ENCODE measurements at regions of chr18 and their contacts with region 1.

Region 1: GRCh38 chr18:63016270-63016669 is 300.9 kb downstream of the PHLPP1 start:
- DNase-seq: peak; percentile 63
- H3K4me3 Mint-ChIP-seq: no peak overlapping the region
- H3K27ac Mint-ChIP-seq: no peak overlapping the region
- H3K4me1 Mint-ChIP-seq: no peaks in the 10 kb centered on the region
- H3K27me3 Mint-ChIP-seq: peaks cover 20% of the 10 kb centered on the region

Region 2: GRCh38 chr18:63046375-63046774 is 30.1 kb after region 1 on chr18:
- CTCF ChIA-PET with region 1: interaction called, 12 read pairs
- POLR2A ChIA-PET with region 1: no interaction called
- intact Hi-C with region 1: no loop called
- DNase-seq: no peak
- H3K4me3 Mint-ChIP-seq: no peak overlapping the region
- H3K27ac Mint-ChIP-seq: no peak overlapping the region
- H3K4me1 Mint-ChIP-seq: peaks cover 12% of the 10 kb centered on the region
- H3K27me3 Mint-ChIP-seq: peaks cover 11% of the 10 kb centered on the region

Region 3: DNA sequence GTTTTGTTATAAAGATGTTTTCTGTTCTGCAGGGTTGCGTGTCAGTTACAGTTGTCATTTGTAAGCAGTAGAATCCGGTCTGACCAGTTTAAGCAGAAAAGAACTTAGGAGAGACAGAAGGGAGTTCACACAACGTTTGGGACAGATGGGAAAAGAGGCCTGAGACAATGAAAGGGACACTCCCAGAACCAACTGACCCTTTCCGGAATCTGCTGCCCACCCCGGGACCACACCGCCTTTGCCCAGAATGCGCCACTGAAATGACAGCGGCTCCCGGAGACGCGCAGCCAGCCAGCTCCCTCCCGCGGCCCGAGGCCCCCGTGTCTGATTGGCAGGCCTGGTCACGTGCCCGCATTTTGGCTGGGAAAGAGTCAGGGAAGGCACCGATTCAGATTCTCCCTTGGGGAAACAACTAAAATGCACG is 58.7 kb after region 1 on chr18:
- CTCF ChIA-PET with region 1: no interaction called
- POLR2A ChIA-PET with region 1: no interaction called
- intact Hi-C with region 1: loop called (anchors 5 kb)
- DNase-seq: peak; percentile 75
- H3K4me3 Mint-ChIP-seq: peak overlapping the region; percentile 78
- H3K27ac Mint-ChIP-seq: no peak overlapping the region
- H3K4me1 Mint-ChIP-seq: peaks cover 11% of the 10 kb centered on the region
- H3K27me3 Mint-ChIP-seq: peaks cover 13% of the 10 kb centered on the region

Region 4: GRCh38 chr18:63119647-63120046 is 103.4 kb after region 1 on chr18:
- CTCF ChIA-PET with region 1: interaction called, 10 read pairs
- POLR2A ChIA-PET with region 1: no interaction called
- intact Hi-C with region 1: loop called (anchors 2 kb)
- DNase-seq: peak; percentile 55
- H3K4me3 Mint-ChIP-seq: no peak overlapping the region
- H3K27ac Mint-ChIP-seq: no peak overlapping the region
- H3K4me1 Mint-ChIP-seq: peaks cover 10% of the 10 kb centered on the region
- H3K27me3 Mint-ChIP-seq: peaks cover 4% of the 10 kb centered on the region

Region 5: GRCh38 chr18:63131106-63131958 is 115.1 kb after region 1 on chr18:
- CTCF ChIA-PET with region 1: interaction called, 25 read pairs
- POLR2A ChIA-PET with region 1: no interaction called
- intact Hi-C with region 1: loop called (anchors 5 kb)
- DNase-seq: peak; percentile 64
- H3K4me3 Mint-ChIP-seq: no peak overlapping the region
- H3K27ac Mint-ChIP-seq: peak overlapping the region; percentile 65
- H3K4me1 Mint-ChIP-seq: peaks cover 30% of the 10 kb centered on the region
- H3K27me3 Mint-ChIP-seq: no peaks in the 10 kb centered on the region

Region 6: DNA sequence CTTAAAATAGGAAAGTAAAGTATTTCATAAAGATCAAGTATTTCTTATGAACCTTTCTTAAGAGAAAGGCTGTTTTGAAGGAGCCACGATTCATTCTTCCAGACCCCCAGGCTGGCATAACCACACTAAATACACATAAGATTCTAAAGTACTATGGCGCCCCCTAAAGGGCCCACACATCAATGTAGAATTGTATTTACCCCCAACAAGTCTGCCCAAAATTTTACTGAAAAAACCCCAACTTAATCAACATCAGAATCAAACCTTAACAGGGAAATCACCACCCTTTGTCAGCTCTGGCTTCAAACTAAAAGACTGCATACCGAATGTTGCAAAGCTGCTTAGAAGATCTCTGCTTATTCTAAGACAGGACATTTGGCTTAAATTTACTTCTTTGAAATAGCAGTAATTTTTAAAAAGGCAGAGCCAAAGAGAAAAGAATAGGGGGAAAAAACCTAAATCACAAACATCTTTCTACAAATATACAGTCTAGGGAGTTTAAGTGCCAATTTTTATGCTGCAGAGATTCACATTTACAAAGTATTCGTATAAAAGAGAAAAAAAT is 323.7 kb after region 1 on chr18:
- CTCF ChIA-PET with region 1: interaction called, 37 read pairs
- POLR2A ChIA-PET with region 1: no interaction called
- intact Hi-C with region 1: loop called (anchors 5 kb)
- DNase-seq: peak; percentile 37
- H3K4me3 Mint-ChIP-seq: no peak overlapping the region
- H3K27ac Mint-ChIP-seq: no peak overlapping the region
- H3K4me1 Mint-ChIP-seq: peaks cover 12% of the 10 kb centered on the region
- H3K27me3 Mint-ChIP-seq: no peaks in the 10 kb centered on the region

Region 7: DNA sequence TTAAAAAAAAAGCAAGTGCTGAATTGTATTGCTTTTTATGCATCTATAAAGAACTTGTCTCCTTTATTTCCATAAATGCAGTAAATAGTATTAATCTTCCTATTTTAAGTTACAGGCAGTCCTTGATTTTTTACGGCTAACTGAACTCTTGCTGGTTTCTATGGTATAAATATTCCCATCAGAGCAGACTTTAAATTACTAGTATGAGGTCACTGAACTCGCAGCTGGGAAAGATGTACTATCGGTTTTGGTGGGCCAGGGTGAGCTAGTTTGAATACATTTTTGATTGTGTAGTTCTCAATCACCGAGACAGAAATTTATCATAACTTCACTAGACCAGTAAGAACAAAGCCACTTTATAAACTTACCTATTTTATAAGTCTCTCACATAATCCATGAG is 371.6 kb after region 1 on chr18:
- CTCF ChIA-PET with region 1: no interaction called
- POLR2A ChIA-PET with region 1: no interaction called
- intact Hi-C with region 1: no loop called
- DNase-seq: no peak
- H3K4me3 Mint-ChIP-seq: no peak overlapping the region
- H3K27ac Mint-ChIP-seq: no peak overlapping the region
- H3K4me1 Mint-ChIP-seq: no peaks in the 10 kb centered on the region
- H3K27me3 Mint-ChIP-seq: no peaks in the 10 kb centered on the region